ENCODE measurements at regions of chr13 and their contacts with region 1.

Region 1: GRCh38 chr13:47774671-47774994 is 226.4 kb downstream of the SUCLA2 start:
- DNase-seq: no peak
- H3K4me3 ChIP-seq: no peak overlapping the region
- H3K27ac ChIP-seq: no peak overlapping the region
- H3K4me1 ChIP-seq: no peaks in the 10 kb centered on the region
- CTCF ChIP-seq: no peak

Region 2: GRCh38 chr13:47287291-47287751 is 487.3 kb before region 1 on chr13:
- CTCF ChIA-PET with region 1: no interaction called
- POLR2A ChIA-PET with region 1: no interaction called
- intact Hi-C with region 1: no loop called
- DNase-seq: no peak
- H3K4me3 ChIP-seq: no peak overlapping the region
- H3K27ac ChIP-seq: no peak overlapping the region
- H3K4me1 ChIP-seq: no peaks in the 10 kb centered on the region
- CTCF ChIP-seq: no peak

Region 3: GRCh38 chr13:47598340-47598911 is 176.2 kb before region 1 on chr13:
- CTCF ChIA-PET with region 1: no interaction called
- POLR2A ChIA-PET with region 1: no interaction called
- intact Hi-C with region 1: loop called (anchors 10 kb)
- DNase-seq: peak; percentile 11
- H3K4me3 ChIP-seq: no peak overlapping the region
- H3K27ac ChIP-seq: no peak overlapping the region
- H3K4me1 ChIP-seq: no peaks in the 10 kb centered on the region
- CTCF ChIP-seq: peak; percentile 77

Measured in OCI-LY7 (cell line).